ENCODE measurements at regions of chr3 and their contacts with region 1.

Region 1: DNA sequence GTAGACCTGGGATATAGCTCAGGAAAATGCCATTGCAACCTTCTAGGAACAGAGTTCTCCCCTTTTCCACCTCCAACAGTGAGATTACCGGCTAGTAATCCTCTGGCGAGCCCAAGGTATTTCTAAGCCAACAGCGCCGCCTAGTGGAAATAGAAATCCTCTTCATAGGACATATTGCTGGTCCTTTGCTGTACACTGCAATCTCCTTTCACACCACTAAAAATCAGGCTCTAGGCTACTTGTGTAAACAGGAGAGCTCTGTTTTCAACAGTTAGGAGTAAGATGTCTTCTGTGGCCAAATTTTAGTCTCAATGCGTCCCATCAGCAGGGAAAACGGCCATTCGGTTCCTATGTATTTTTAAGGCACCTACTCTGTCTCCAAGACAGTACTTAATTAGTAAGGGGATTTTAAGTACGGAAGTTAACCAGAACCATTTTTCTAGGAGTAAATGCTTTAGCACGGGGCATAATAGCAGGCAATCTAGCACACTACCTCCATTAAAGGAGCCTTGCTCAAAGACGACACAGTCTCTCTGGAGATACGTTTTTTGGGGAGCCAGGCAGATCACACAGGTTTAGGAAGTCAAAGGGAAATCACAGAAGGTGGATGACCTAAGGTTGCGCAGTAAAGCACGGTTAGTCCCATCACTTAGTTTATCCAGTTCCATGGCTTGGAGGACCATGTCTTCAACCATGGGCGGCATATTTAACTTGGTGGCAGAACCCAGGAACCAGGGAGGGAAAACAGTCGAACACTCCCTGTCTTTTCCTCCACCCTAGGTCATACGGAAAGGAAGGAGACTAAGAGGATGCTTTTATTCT is 43.8 kb downstream of the NCEH1 start:
- DNase-seq: peak; percentile 33 to 87 (median 68)
- ATAC-seq: peak; percentile 77 to 94 (median 82)
- H3K4me3 ChIP-seq: no peak overlapping the region
- H3K4me3 Mint-ChIP-seq: peak overlapping the region in 1 of 3 donors; percentile 50
- H3K27ac ChIP-seq: no peak overlapping the region
- H3K27ac Mint-ChIP-seq: no peak overlapping the region
- H3K4me1 ChIP-seq: peaks cover 3 to 18% of the 10 kb centered on the region in 2 experiments
- H3K4me1 Mint-ChIP-seq: peaks cover 17 to 26% (median 21%) of the 10 kb centered on the region in 3 donors
- H3K27me3 ChIP-seq: no peaks in the 10 kb centered on the region
- H3K27me3 Mint-ChIP-seq: no peaks in the 10 kb centered on the region

Region 2: DNA sequence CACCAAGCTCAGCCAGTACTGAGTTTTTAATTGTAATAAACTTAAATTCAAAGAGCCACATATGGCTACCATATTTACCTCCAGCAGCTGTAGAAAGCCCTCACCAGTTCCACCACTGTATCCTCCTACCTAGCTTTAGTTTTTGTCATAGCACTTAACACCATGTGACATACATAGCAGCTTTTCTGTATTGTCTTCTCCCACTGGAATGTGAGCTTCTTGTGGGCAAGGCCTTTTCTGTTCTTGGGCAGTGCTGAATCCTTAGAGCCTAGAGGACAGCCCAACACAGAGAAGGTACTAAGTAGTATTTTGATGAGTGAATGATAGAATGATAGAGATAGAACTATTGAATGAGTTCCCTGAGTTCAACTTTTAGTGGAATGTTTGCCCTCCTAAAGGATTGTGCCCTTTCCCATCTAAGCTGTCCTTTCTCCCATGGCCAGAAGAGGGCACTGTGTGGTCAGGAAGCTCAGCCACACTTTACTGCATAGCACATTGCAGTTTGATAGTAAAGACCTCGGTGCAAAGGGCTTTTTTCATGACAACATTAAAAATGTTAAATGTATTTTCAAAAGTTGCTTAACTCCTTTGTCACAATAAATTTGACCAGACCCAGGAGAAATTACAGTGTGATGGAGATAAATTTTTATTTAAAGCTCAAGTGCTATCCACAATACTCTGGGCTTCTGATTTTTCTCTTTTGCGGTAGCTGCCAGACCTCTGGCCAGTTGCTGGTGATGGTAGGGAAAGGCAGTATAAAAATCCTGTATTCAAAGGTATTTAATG is 334.6 kb before region 1 on chr3:
- CTCF ChIA-PET with region 1: interaction called, 14 to 31 read pairs
- POLR2A ChIA-PET with region 1: no interaction called
- DNase-seq: peak in 33 of 35 experiments; percentile 8 to 74 (median 29)
- ATAC-seq: peak; percentile 70 to 79 (median 77)
- H3K4me3 ChIP-seq: no peak overlapping the region
- H3K4me3 Mint-ChIP-seq: no peak overlapping the region
- H3K27ac ChIP-seq: no peak overlapping the region
- H3K27ac Mint-ChIP-seq: no peak overlapping the region
- H3K4me1 ChIP-seq: no peaks in the 10 kb centered on the region
- H3K4me1 Mint-ChIP-seq: peaks cover 0 to 5% (median 4%) of the 10 kb centered on the region in 3 donors
- H3K27me3 ChIP-seq: no peaks in the 10 kb centered on the region
- H3K27me3 Mint-ChIP-seq: no peaks in the 10 kb centered on the region

Region 3: GRCh38 chr3:172511783-172512762 is 155.0 kb before region 1 on chr3:
- CTCF ChIA-PET with region 1: no interaction called
- POLR2A ChIA-PET with region 1: interaction called in 1 of 2 experiments, 10 read pairs
- DNase-seq: peak in 34 of 35 experiments; percentile 26 to 77 (median 56)
- ATAC-seq: peak; percentile 60 to 76 (median 68)
- H3K4me3 ChIP-seq: peak overlapping the region; percentile 1 to 60
- H3K4me3 Mint-ChIP-seq: peak overlapping the region; percentile 54 to 93 (median 67)
- H3K27ac ChIP-seq: peak overlapping the region; percentile 52
- H3K27ac Mint-ChIP-seq: peak overlapping the region; percentile 94 to 95
- H3K4me1 ChIP-seq: peaks cover 44 to 50% of the 10 kb centered on the region in 2 experiments
- H3K4me1 Mint-ChIP-seq: peaks cover 68 to 81% (median 76%) of the 10 kb centered on the region in 3 donors
- H3K27me3 ChIP-seq: no peaks in the 10 kb centered on the region
- H3K27me3 Mint-ChIP-seq: no peaks in the 10 kb centered on the region

Region 4: DNA sequence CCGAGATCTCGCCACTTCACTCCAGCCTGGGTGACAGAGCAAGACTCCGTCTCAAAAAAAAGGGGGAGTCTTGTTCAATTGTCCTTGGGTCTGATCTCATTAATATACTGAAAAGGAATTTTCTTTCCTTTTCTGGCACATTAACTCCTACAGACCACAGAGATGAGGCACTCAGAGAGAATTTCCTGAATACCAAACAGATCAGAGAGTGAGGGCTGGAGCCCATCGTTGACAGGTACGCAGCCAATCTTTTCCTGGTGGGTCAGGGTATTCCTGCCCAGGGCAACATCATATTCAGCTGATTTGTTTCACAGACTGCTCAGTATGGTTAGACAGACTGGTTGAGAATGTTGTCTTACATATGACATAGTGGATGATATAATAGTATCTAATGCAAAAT is 61.1 kb before region 1 on chr3:
- CTCF ChIA-PET with region 1: no interaction called
- POLR2A ChIA-PET with region 1: no interaction called
- DNase-seq: no peak
- ATAC-seq: no peak
- H3K4me3 ChIP-seq: no peak overlapping the region
- H3K4me3 Mint-ChIP-seq: no peak overlapping the region
- H3K27ac ChIP-seq: no peak overlapping the region
- H3K27ac Mint-ChIP-seq: no peak overlapping the region
- H3K4me1 ChIP-seq: no peaks in the 10 kb centered on the region
- H3K4me1 Mint-ChIP-seq: no peaks in the 10 kb centered on the region
- H3K27me3 ChIP-seq: no peaks in the 10 kb centered on the region
- H3K27me3 Mint-ChIP-seq: no peaks in the 10 kb centered on the region

Region 5: DNA sequence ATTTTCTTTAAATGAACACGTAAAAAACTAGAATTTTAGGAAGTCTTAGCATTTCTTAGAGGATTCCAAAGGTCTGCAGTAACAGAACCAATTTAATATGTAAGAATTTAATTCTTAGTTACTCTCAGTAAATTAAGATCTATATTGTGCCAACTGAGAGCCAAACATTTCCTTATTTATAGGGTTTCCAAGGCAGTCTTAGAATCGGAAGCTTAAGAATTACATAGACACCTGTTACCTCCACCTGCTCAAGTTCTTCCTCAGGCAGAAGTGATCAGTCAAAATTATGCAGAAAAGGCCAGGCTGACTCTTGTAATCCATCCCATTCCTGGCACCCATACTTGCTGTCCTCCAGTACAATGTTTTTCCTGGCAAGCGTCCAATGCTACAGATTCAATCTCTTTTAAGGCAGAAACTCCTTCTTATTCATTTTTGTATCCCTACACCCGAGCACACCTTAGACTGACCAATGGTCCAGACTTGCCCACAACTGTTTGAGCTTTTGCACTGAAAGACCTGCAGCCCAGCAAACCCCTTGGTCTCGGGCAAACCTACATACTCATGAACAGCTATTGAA is 20.6 kb before region 1 on chr3:
- CTCF ChIA-PET with region 1: interaction called in 1 of 2 experiments, 14 read pairs
- POLR2A ChIA-PET with region 1: no interaction called
- DNase-seq: no peak
- ATAC-seq: no peak
- H3K4me3 ChIP-seq: no peak overlapping the region
- H3K4me3 Mint-ChIP-seq: no peak overlapping the region
- H3K27ac ChIP-seq: no peak overlapping the region
- H3K27ac Mint-ChIP-seq: no peak overlapping the region
- H3K4me1 ChIP-seq: no peaks in the 10 kb centered on the region
- H3K4me1 Mint-ChIP-seq: no peaks in the 10 kb centered on the region
- H3K27me3 ChIP-seq: no peaks in the 10 kb centered on the region
- H3K27me3 Mint-ChIP-seq: no peaks in the 10 kb centered on the region

Region 6: DNA sequence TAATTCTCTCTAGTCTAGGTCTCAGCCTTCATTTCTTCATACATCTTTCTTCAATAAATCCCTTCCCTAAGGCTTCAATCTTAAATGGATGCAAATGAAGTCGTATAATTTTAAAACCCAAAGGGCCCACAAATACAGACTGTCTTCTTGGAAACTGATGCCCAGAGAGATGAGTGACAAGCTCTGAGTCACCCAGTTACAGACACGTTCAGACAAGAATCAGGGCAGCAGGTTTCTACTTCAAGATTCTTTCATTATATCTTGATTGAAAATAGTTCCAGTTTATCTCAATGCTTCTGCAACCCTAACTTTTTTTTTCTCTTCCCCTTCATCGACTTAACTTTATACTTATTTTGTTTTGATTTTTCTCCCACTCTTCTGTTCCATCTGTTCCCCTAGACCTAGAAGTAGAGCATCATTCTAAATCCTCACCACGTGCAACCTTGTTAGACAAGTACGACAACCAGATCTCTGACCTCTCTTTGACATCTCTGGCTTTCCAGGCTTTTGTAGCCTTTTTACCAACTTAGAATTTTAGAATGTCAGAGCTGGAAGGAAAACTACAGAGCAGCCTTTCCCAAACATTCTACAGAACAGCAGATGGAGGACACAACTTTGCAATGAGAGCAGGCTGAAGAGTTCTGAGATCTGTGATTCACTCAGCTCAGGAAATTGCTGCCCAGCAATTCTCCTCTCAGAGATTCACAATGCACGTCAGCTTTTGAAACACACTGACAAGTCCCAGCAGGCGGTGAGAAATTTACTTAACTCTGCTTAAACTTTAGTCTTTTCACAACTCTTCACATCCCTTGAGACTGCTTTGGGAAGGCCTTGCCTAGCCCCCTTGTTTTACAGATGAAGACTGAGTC is 18.5 kb after region 1 on chr3:
- CTCF ChIA-PET with region 1: no interaction called
- POLR2A ChIA-PET with region 1: no interaction called
- DNase-seq: no peak
- ATAC-seq: no peak
- H3K4me3 ChIP-seq: no peak overlapping the region
- H3K4me3 Mint-ChIP-seq: no peak overlapping the region
- H3K27ac ChIP-seq: no peak overlapping the region
- H3K27ac Mint-ChIP-seq: no peak overlapping the region
- H3K4me1 ChIP-seq: no peaks in the 10 kb centered on the region
- H3K4me1 Mint-ChIP-seq: peaks cover 0 to 2% (median 0%) of the 10 kb centered on the region in 3 donors
- H3K27me3 ChIP-seq: no peaks in the 10 kb centered on the region
- H3K27me3 Mint-ChIP-seq: no peaks in the 10 kb centered on the region